Activated naive CD4-positive, alpha-beta T cell treated with anti-CD3 and anti-CD28 coated beads for 36 hours (primary cell): ENCODE measurements at regions of chr1 and their contacts with region 1.

Region 1: GRCh38 chr1:199948587-199949280 is 78.8 kb upstream of the NR5A2 start:
- DNase-seq: no peak
- H3K4me3 Mint-ChIP-seq: no peak overlapping the region
- H3K27ac Mint-ChIP-seq: no peak overlapping the region
- H3K4me1 Mint-ChIP-seq: no peaks in the 10 kb centered on the region
- H3K27me3 Mint-ChIP-seq: peaks cover 41% of the 10 kb centered on the region

Region 2: GRCh38 chr1:199843861-199844260 is 104.9 kb before region 1 on chr1:
- CTCF ChIA-PET with region 1: no interaction called
- intact Hi-C with region 1: no loop called
- DNase-seq: no peak
- H3K4me3 Mint-ChIP-seq: no peak overlapping the region
- H3K27ac Mint-ChIP-seq: no peak overlapping the region
- H3K4me1 Mint-ChIP-seq: no peaks in the 10 kb centered on the region
- H3K27me3 Mint-ChIP-seq: peaks cover 10% of the 10 kb centered on the region

Region 3: GRCh38 chr1:200038981-200039848 is 90.5 kb after region 1 on chr1:
- CTCF ChIA-PET with region 1: no interaction called
- intact Hi-C with region 1: loop called (anchors 5 kb)
- DNase-seq: peak; percentile 35
- H3K4me3 Mint-ChIP-seq: peak overlapping the region; percentile 69
- H3K27ac Mint-ChIP-seq: no peak overlapping the region
- H3K4me1 Mint-ChIP-seq: peaks cover 34% of the 10 kb centered on the region
- H3K27me3 Mint-ChIP-seq: peaks cover 44% of the 10 kb centered on the region